ENCODE measurements at regions of chrX and their contacts with region 1.

Region 1: GRCh38 chrX:148380650-148381561 is 119.5 kb upstream of the AFF2 start:
- DNase-seq: peak; percentile 67
- H3K4me3 Mint-ChIP-seq: peak overlapping the region; percentile 54
- H3K27ac Mint-ChIP-seq: peak overlapping the region; percentile 93
- H3K4me1 Mint-ChIP-seq: peaks cover 30% of the 10 kb centered on the region
- H3K27me3 Mint-ChIP-seq: no peaks in the 10 kb centered on the region

Region 2: DNA sequence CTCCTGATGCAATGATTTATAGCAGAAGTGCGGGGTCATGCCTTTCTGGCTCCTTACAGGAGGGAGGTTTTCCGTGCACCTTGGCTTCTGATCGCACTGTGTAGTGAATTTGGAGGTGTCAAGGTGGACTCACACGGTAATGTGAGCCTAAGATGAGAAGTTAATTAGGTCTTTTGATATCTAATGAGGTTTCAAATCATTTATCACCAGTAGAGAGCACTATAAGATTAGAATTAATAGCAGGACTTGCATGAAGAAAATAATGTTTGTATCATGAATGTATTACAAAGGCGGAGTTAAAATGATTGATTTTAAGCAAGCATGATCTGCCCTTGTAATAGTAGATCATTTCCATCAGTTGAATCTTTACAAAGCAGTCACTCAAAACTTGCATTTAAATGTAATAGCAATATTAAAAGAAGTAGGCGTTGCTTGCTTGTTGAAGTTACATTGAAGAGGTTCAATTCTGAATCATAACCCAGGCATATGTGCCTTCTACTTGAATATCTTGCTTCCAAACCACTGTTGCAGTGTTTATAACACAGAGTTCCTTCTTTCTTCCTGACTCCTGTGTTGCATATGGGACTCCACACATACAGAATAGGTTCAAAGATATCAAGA is 247.7 kb before region 1 on chrX:
- CTCF ChIA-PET with region 1: no interaction called
- intact Hi-C with region 1: loop called (anchors 1 kb)
- DNase-seq: no peak
- H3K4me3 Mint-ChIP-seq: no peak overlapping the region
- H3K27ac Mint-ChIP-seq: no peak overlapping the region
- H3K4me1 Mint-ChIP-seq: no peaks in the 10 kb centered on the region
- H3K27me3 Mint-ChIP-seq: no peaks in the 10 kb centered on the region

Region 3: GRCh38 chrX:148282504-148282903 is 98.4 kb before region 1 on chrX:
- CTCF ChIA-PET with region 1: no interaction called
- intact Hi-C with region 1: loop called (anchors 1 kb)
- DNase-seq: no peak
- H3K4me3 Mint-ChIP-seq: no peak overlapping the region
- H3K27ac Mint-ChIP-seq: peak overlapping the region; percentile 92
- H3K4me1 Mint-ChIP-seq: peaks cover 36% of the 10 kb centered on the region
- H3K27me3 Mint-ChIP-seq: no peaks in the 10 kb centered on the region

Region 4: DNA sequence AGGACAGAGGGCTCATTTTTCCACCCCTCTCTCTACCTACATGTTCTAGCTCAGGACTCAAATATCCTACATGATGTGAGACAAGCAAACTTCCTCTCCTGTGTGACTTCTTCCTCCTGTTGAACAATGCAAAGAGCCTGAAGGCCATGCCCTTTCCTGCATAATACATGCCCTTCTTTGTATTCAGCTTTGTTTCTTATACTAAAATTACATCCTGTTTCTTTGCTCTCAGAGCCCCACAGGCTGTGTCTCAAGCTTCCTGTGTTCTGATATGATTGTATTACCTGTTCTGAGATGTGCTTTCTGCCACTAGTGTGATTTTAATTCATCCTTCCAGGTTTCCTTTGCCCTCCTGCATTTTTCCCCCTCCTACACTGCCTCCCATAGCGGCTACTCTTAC is 46.9 kb before region 1 on chrX:
- CTCF ChIA-PET with region 1: no interaction called
- intact Hi-C with region 1: loop called (anchors 5 kb)
- DNase-seq: peak; percentile 29
- H3K4me3 Mint-ChIP-seq: no peak overlapping the region
- H3K27ac Mint-ChIP-seq: peak overlapping the region; percentile 64
- H3K4me1 Mint-ChIP-seq: peaks cover 69% of the 10 kb centered on the region
- H3K27me3 Mint-ChIP-seq: no peaks in the 10 kb centered on the region

Region 5: GRCh38 chrX:148422531-148422930 is 41.6 kb after region 1 on chrX:
- CTCF ChIA-PET with region 1: no interaction called
- intact Hi-C with region 1: loop called (anchors 2 kb)
- DNase-seq: peak; percentile 6
- H3K4me3 Mint-ChIP-seq: no peak overlapping the region
- H3K27ac Mint-ChIP-seq: no peak overlapping the region
- H3K4me1 Mint-ChIP-seq: peaks cover 22% of the 10 kb centered on the region
- H3K27me3 Mint-ChIP-seq: no peaks in the 10 kb centered on the region

Region 6: GRCh38 chrX:148500423-148501385 is 119.8 kb after region 1 on chrX and contains the start of gene AFF2:
- CTCF ChIA-PET with region 1: no interaction called
- intact Hi-C with region 1: loop called (anchors 1 kb)
- DNase-seq: peak; percentile 51
- H3K4me3 Mint-ChIP-seq: peak within 1 kb of the TSS; percentile 77
- H3K27ac Mint-ChIP-seq: no peak within 1 kb of the TSS
- H3K4me1 Mint-ChIP-seq: peaks cover 16% of the 10 kb centered on the region
- H3K27me3 Mint-ChIP-seq: peaks cover 2% of the 10 kb centered on the region
- total RNA-seq, gene AFF2: 1.7 to 2.0 TPM

Region 7: DNA sequence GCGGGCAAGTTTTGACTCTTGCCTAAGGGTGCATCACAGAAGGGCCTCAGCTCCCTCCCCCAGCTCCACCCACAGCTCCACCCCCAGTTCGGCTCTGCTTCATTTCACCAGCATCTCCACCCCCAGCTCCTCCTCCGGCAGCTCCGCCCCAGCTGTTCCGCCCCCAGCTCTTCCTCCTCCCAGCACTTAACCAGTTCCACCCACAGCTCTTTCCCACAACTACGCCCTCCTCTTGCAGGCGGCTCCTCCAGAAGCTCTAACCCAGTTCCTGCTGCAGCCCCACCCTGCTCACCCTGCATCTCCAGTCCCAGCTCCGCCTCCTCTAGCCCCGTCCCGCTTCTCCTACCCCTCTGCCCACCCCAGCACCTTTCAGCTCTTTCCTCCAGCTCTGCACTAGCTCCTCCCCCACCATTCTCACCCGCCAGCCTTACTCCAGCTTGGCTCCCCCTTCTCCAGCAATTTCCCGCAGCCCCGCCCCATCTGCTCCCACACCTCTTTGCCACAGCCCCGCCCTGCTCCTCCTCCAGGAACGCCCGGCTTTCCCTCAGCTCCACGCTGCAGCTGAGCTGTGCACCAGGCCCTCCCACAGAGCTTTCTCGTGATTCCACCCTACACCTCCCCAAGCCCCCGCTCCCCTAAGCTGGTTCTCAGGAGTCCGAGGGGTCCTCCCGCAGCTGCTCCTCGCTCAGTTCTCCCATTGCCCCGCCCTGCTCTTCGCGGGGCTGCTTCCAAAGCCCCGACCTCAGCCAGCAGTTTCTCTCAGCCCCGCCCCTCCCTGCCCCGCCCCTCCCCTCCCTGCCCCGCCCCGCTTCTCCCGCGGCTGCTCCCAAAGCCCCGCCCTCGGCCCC is 1158.6 kb after region 1 on chrX:
- CTCF ChIA-PET with region 1: no interaction called
- intact Hi-C with region 1: loop called (anchors 10 kb)
- DNase-seq: peak; percentile 92
- H3K4me3 Mint-ChIP-seq: peak overlapping the region; percentile 79
- H3K27ac Mint-ChIP-seq: peak overlapping the region; percentile 73
- H3K4me1 Mint-ChIP-seq: peaks cover 2% of the 10 kb centered on the region
- H3K27me3 Mint-ChIP-seq: no peaks in the 10 kb centered on the region